Activated CD4-positive, alpha-beta memory T cell treated with anti-CD3 and anti-CD28 coated beads, Interleukin-2, amount 10 ng/mL, durations not matched to agents 7 days and 5 days (primary cell): ENCODE measurements at regions of chr15 and their contacts with region 1.

Region 1: DNA sequence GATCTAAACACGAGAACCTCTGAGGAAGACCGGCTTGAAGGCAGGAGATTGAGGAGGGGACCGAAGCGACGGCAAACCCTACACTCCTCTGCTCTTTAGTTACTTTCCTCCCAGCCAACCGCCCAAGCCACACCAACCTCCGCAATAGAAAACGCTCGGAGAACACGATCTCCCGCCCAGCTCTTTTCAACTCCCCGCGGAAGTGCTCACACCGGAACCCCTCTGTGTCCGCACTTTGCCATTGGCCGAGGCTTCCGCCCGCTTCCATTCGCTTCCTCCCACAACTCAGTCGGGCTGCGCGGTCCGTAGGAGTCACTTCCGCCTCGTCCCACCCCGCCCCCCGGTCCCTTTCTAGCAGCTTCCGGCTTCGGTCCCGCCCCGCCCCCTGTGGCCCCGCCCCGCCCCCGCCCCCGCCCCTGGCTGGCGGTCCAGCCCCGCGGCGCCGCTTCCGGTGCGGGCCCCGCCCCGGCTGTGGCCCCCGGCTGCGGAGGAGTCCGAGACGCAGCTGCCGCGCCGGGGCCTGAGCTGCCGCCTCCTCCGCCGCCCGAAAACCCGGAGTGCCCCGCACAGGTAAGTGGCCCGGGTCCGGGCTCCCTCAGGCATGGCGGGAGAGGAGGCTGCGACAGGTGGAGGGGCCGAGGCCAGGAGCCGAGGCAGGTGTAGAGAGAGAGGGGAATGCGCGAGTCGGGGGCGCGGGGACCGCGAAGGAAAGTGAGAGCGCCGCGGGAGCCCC is at the start of gene ARID3B:
- DNase-seq: peak; percentile 97
- H3K4me3 Mint-ChIP-seq: peak within 1 kb of the TSS; percentile 99
- H3K27ac Mint-ChIP-seq: peak within 1 kb of the TSS; percentile 96
- H3K4me1 Mint-ChIP-seq: peaks cover 58% of the 10 kb centered on the region
- H3K27me3 Mint-ChIP-seq: no peaks in the 10 kb centered on the region
- total RNA-seq, gene ARID3B: 49.2 to 52.1 TPM

Region 2: GRCh38 chr15:74407055-74407691 is 133.8 kb before region 1 on chr15:
- CTCF ChIA-PET with region 1: no interaction called
- POLR2A ChIA-PET with region 1: interaction called, 13 read pairs
- DNase-seq: no peak
- H3K4me3 Mint-ChIP-seq: no peak overlapping the region
- H3K27ac Mint-ChIP-seq: no peak overlapping the region
- H3K4me1 Mint-ChIP-seq: peaks cover 24% of the 10 kb centered on the region
- H3K27me3 Mint-ChIP-seq: no peaks in the 10 kb centered on the region

Region 3: DNA sequence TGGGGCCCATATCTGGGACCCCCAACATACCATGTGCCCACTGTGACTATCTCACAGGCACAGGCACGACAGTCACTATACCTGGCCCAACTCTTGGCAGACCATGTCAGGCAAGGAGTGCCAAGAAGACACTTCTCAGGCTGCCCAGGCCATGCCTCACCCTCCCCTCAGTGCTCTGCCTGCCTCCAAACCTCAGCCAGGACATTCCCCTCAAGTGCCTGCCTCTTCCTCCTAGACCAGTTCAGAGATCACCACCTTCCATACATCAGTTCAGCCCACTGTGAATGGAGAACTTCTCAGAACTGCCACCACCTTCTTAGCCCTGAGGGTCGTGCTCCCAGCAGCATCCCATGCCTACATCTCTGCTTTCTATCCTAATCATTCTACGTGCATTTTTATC is 102.7 kb before region 1 on chr15:
- CTCF ChIA-PET with region 1: no interaction called
- POLR2A ChIA-PET with region 1: no interaction called
- DNase-seq: no peak
- H3K4me3 Mint-ChIP-seq: no peak overlapping the region
- H3K27ac Mint-ChIP-seq: no peak overlapping the region
- H3K4me1 Mint-ChIP-seq: peaks cover 19% of the 10 kb centered on the region
- H3K27me3 Mint-ChIP-seq: no peaks in the 10 kb centered on the region

Region 4: DNA sequence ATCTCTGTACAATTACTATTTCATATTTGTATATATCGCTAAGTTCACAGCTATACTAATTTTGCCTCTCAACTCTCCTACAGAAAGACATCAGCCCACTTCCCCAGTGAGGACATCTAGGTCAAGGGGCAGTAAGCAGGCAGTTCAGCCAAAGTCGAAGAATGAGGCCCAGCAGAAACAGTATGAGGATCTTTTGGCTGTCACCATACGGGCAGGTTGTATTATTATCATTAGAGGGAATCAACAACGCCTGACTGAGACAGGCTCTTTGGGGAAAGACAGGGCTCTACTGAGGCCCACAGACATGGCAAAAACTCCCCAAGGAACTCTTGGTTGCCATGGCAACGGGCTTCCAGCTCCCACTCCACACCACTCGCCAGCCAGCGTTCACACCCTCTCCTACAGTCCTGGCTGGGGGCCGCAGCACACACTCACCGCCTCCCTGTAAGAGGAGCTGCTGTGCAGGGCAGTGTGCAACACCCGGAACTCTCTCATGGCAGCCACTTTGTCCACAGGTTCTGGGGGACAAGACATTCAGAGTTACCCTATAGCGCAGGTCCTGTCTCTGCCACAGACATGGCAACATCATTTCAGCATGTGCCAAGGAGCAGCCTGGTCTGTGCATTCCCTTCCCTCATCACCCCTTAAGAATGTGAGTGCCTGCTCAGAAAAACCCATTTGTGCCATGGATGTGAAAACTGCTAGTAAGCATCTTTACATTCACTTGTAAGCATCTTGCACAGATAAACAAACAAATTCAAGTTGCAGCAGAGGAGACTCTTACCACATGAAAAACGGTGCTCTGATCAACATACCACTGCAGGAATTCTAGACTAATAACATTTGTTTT is 88.8 kb before region 1 on chr15:
- CTCF ChIA-PET with region 1: no interaction called
- POLR2A ChIA-PET with region 1: no interaction called
- DNase-seq: no peak
- H3K4me3 Mint-ChIP-seq: no peak overlapping the region
- H3K27ac Mint-ChIP-seq: no peak overlapping the region
- H3K4me1 Mint-ChIP-seq: peaks cover 28% of the 10 kb centered on the region
- H3K27me3 Mint-ChIP-seq: no peaks in the 10 kb centered on the region

Region 5: DNA sequence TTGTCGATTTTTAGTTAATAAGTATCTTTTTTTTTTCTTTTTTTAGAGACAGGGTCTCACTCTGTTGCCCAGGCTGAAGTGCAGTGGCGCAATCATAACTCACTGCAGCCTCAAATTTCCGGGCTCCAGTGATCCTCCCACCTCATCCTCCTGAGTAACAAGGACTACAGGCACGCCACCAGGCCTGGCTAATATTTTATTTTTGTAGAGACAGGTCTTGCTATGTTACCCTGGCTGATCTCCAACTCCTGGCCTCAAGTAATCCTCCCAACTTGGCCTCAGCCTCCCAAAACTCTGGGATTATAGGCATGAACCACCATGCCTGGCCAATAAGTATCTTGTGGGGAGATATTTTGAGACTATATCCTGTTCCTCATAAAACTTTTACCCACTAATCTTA is 29.3 kb before region 1 on chr15:
- CTCF ChIA-PET with region 1: no interaction called
- POLR2A ChIA-PET with region 1: interaction called, 12 read pairs
- DNase-seq: no peak
- H3K4me3 Mint-ChIP-seq: no peak overlapping the region
- H3K27ac Mint-ChIP-seq: peak overlapping the region; percentile 75
- H3K4me1 Mint-ChIP-seq: peaks cover 20% of the 10 kb centered on the region
- H3K27me3 Mint-ChIP-seq: no peaks in the 10 kb centered on the region

Region 6: GRCh38 chr15:74552773-74553441 is 12.0 kb after region 1 on chr15:
- CTCF ChIA-PET with region 1: interaction called, 20 read pairs
- POLR2A ChIA-PET with region 1: interaction called, 99 read pairs
- DNase-seq: peak; percentile 43
- H3K4me3 Mint-ChIP-seq: peak overlapping the region; percentile 45
- H3K27ac Mint-ChIP-seq: peak overlapping the region; percentile 82
- H3K4me1 Mint-ChIP-seq: peaks cover 73% of the 10 kb centered on the region
- H3K27me3 Mint-ChIP-seq: no peaks in the 10 kb centered on the region

Region 7: DNA sequence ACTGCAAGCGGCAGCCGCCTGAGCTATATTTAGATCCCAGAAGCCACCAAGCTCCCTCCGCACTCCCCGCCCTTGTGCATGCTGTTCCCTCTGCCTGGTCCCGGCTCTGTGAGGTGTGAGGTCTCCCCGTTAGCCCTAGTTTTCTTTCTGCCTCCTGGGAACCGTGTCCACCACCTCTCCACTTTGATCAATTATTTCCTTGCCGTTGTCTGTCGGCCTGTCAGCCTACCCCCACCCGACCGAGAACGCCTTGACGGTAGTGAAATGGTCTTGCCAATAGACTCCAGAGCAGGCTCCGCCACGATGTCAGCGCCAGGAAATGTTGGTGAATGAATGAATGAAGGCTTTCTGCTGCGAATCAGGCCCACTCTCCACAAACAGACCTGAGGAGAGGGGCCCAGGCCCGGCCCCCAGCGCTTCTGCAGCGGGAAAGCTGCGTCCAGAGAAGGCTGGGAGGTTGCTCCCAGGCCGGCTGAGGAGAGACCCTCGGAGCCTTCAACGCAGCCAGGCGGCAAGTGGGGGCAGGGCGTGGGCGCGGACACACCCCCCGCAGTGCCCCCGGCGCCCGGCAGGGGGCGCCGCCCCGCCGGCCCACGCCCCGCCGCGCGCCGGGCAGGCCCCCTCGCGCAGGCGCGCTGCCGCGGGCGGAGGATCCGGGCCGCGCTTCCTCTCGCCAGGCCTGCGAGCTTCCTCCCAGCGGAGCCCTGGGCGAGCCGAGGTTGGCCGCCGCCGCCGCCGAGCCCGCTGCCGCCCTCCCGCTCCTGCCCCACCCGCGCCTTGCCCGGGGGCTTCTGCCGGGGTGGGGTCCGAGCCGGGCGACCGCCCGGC is 240.7 kb after region 1 on chr15 and contains the start of gene CSK:
- CTCF ChIA-PET with region 1: no interaction called
- POLR2A ChIA-PET with region 1: interaction called, 11 read pairs
- DNase-seq: peak; percentile 83
- H3K4me3 Mint-ChIP-seq: peak within 1 kb of the TSS; percentile 91
- H3K27ac Mint-ChIP-seq: peak within 1 kb of the TSS; percentile 100
- H3K4me1 Mint-ChIP-seq: peaks cover 60% of the 10 kb centered on the region
- H3K27me3 Mint-ChIP-seq: no peaks in the 10 kb centered on the region
- total RNA-seq, gene CSK: 330 to 341 TPM